ENCODE measurements at regions of chr2 and their contacts with region 1.

Region 1: DNA sequence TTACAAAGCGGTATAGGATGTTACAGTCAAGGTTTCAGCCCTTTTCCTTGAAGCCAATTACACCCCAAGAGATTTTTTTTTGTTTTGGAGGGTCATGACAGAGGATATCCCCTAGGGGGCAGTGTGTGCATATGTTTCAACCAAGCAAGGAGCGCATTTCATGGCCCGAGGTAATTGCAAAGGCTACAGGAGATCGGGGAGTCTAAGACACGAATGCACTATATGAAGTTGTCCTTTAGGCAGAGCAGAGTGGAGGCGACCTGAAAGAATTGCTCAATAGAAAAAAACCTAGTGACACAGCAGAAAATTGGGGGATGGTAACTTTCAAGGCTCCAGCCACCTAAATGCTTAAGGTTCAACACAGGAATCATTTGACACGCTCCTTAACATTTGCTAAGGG is 219.8 kb upstream of the PARD3B start:
- DNase-seq: no peak

Region 2: GRCh38 chr2:203972066-203972465 is 353.4 kb before region 1 on chr2:
- intact Hi-C with region 1: no loop called
- DNase-seq: no peak

Region 3: DNA sequence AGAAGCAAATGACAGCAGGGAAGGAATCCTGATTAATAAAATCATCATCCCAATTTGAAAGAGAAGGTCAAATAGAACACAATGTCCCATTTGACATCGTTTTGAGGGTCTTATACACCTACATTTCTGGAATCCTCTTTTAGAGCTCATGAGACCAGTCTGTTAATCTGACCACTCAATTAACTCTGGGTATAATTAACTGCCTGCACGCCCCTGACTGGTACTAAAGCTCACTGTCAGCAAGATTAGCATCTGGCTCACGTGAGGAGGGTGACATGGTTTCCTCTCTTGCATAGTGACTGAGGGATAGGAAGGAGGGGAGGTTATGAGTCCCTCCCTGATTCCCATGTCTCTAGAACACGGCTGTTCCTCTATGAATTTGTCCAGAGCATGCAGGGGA is 264.6 kb before region 1 on chr2:
- intact Hi-C with region 1: no loop called
- DNase-seq: no peak

Region 4: GRCh38 chr2:204407204-204408070 is 82.0 kb after region 1 on chr2:
- intact Hi-C with region 1: no loop called
- DNase-seq: no peak

Region 5: GRCh38 chr2:204545023-204545860 is 219.8 kb after region 1 on chr2 and contains the start of gene PARD3B:
- intact Hi-C with region 1: loop called (anchors 10 kb)
- DNase-seq: peak; percentile 81
- total RNA-seq, gene PARD3B: 9.5 TPM

Region 6: DNA sequence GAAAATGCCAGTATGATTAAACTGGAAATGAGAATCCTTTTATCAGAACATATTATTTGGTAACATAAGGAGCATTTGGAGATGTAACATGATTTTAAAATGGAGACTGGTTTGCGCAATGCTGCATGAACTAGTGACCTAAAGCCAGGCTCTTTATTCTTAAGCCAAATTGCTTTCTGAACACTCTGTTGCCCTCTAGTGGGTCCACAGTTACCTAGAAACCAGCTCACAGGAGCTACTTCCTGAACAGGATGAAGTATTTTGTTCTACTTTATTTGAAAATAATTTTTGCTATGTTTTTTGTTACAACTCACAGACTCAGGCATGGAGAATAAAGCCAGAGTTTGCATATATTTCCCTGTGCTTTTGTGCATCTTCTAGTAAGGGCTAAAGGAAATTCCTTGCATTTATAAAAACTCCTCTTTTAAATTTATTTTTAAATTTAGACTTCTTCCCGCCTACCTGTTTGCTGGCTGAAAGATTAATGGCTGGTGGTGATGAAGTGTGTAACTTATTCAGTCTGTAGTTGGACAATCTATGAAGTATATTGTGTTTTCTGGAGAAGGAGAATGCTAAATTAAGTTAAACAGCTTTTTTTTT is 366.5 kb after region 1 on chr2:
- intact Hi-C with region 1: loop called (anchors 2 kb)
- DNase-seq: no peak

Region 7: GRCh38 chr2:205706769-205707381 is 1381.4 kb after region 1 on chr2:
- intact Hi-C with region 1: loop called (anchors 10 kb)
- DNase-seq: no peak

Region 8: DNA sequence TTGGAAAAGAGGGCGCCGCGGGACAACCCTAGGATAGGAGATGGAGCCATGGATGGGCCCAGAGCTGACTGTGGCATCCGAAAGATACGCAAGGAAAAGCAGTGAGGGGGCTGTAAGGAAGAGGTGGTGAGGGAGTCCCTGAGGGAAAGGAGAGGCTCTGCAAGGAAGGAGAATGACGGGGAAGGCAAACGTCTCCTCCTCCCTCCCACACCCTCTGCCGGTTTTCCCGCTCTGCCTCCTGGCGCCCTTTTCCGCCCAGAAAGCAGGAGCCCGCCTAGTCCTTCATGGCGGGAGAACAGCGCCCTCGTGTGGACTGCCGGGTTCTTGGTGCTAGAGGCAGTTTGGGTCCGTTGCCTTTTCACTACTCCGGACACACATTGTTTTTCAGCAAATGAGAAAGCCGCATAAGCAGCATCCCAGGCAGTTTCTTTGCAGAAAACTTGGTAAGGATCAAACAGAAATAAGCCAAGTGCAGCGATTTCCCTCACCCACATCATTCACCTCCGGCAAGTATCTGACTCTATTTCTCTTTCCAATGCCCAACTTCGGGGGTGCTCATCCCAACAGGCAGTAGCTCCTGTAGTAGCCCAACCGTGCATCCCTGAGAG is 1560.1 kb after region 1 on chr2:
- intact Hi-C with region 1: loop called (anchors 10 kb)
- DNase-seq: peak; percentile 86